ENCODE measurements at regions of chr1 and their contacts with region 1.

Region 1: GRCh38 chr1:225746361-225747179 is 31.1 kb upstream of the SRP9 start:
- DNase-seq: peak; percentile 85
- H3K4me3 ChIP-seq: peak overlapping the region; percentile 24 to 55 (median 48)
- H3K27ac ChIP-seq: peak overlapping the region; percentile 86 to 90 (median 88)
- H3K4me1 ChIP-seq: peaks cover 0 to 42% (median 32%) of the 10 kb centered on the region in 4 donors
- H3K27me3 ChIP-seq: no peaks in the 10 kb centered on the region
- CTCF ChIP-seq: peak in 2 of 4 experiments; percentile 25 to 29
- EP300 ChIP-seq: no peak
- POLR2A ChIP-seq: no peak

Region 2: GRCh38 chr1:225662155-225662554 is 84.4 kb before region 1 on chr1:
- intact Hi-C with region 1: loop called (anchors 2 kb)
- DNase-seq: no peak
- H3K4me3 ChIP-seq: no peak overlapping the region
- H3K27ac ChIP-seq: peak overlapping the region; percentile 78 to 100 (median 99)
- H3K4me1 ChIP-seq: peaks cover 0 to 53% (median 40%) of the 10 kb centered on the region in 4 donors
- H3K27me3 ChIP-seq: no peaks in the 10 kb centered on the region
- CTCF ChIP-seq: no peak
- EP300 ChIP-seq: peak; percentile 88 to 95 (median 92)
- POLR2A ChIP-seq: no peak